ENCODE measurements at regions of chr6 and their contacts with region 1.

Region 1: DNA sequence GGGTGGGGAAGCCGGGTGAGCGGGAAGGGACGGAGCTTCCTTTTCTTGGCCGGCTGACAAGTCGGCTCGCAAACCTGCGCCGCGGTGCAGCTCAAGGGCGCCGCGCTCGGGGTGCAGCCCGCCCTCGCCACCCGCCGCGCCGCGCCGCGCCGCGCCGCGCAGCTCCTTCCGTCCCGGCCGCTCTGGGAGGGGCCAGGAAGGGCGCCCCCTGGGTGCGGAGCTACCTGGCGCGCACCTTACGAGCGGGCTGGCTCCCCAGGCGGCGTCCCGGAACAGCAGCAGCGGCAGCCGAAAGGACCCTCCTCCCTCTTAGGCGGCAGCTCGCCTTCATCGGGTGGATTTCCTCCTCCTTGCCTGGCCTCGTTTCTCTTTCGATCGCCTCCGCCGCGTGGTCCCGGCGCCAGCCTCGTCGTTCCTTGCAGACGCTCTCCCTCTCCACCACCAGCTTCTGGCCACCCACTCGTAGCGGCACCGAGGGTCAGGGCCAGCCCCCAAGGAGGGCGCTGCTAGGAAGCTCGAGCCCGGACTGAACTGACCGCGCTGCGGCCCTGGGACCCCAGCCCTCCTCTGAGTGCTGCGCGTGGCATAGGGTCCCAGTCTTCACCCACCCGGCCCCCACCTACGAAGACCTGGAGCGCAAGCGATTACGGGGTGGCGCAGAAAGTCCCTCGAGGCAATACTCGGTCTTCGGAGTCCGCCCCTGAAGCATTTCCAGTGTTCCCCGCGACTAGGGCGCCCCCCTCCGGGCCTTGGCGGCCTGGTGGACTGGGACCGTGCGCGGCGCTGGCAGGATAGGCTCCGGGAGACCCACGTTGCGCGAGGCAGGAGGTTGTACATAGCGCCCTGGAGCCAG is at the start of gene MAP3K5:
- DNase-seq: peak; percentile 91
- ATAC-seq: peak; percentile 74
- H3K4me3 Mint-ChIP-seq: peak within 1 kb of the TSS; percentile 97
- H3K27ac Mint-ChIP-seq: peak within 1 kb of the TSS; percentile 96
- H3K4me1 Mint-ChIP-seq: peaks cover 42% of the 10 kb centered on the region
- H3K27me3 Mint-ChIP-seq: no peaks in the 10 kb centered on the region
- CTCF ChIP-seq: no peak
- total RNA-seq, gene MAP3K5: 21.6 and 24.4 TPM in 2 replicates

Region 2: DNA sequence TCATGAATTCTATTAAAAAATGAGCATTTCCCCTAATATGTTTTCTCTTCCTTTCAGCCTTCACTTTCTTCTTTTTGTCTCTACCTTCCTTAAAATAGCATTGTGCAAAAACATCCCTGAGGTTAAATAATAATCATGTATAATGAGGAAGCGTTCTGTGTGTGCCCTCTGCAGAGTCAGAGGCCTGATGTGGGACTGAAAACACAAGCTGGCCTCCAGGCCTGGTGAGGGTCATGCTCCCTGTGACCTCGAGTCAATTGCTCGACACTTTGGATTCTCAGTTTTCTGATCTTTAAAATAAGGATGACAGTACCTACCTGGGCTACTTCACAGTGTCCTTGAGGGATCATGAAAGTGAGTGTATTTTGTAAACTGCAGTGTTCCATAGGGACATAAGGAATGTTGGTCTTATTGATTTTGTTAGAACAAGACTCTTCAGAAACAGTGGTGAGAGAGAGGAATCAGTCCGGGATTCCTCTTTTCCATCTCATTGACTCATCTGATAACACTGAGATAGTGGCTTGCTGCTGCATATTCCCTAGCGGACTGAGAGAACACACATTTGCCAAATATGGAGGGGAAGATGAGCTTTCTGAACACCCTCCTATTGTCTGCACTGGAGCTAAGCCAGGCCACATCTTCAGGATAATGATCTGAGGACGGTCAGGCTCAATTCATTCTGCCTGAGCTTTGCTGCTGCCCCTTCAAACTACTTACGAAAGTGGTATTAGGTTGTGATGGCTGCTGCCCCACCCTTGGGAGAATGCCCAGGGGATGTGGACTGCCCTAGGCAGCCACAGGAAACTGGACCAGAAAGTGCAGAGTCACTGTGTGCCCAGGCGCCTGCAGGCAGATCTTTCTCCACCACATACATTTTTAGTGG is 980.8 kb before region 1 on chr6:
- CTCF ChIA-PET with region 1: no interaction called
- POLR2A ChIA-PET with region 1: no interaction called
- intact Hi-C with region 1: no loop called
- DNase-seq: no peak
- ATAC-seq: no peak
- H3K4me3 Mint-ChIP-seq: no peak overlapping the region
- H3K27ac Mint-ChIP-seq: no peak overlapping the region
- H3K4me1 Mint-ChIP-seq: no peaks in the 10 kb centered on the region
- H3K27me3 Mint-ChIP-seq: no peaks in the 10 kb centered on the region
- CTCF ChIP-seq: no peak

Region 3: GRCh38 chr6:136582711-136583471 is 209.7 kb before region 1 on chr6:
- CTCF ChIA-PET with region 1: interaction called, 9 read pairs
- POLR2A ChIA-PET with region 1: no interaction called
- intact Hi-C with region 1: loop called (anchors 1 kb)
- DNase-seq: no peak
- ATAC-seq: peak; percentile 28
- H3K4me3 Mint-ChIP-seq: no peak overlapping the region
- H3K27ac Mint-ChIP-seq: no peak overlapping the region
- H3K4me1 Mint-ChIP-seq: peaks cover 5% of the 10 kb centered on the region
- H3K27me3 Mint-ChIP-seq: no peaks in the 10 kb centered on the region
- CTCF ChIP-seq: no peak

Region 4: DNA sequence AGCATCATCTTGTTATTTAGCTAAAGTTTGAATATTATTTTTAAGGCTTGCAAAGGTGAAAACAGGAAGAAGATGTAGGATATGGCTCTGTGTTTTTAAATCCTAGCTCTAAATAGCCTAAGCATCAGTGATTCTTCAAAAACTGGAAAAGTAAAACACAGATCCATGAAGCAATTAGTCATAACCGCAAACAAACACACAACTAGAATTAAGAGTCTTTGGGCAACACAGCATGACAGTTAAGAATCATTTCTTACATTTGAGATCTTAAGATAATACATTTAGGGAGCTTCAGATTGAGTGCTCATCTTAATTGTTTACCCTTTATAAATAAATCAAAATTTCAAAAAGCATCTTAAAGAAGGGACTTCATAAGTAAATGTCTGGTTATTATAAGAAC is 126.6 kb before region 1 on chr6:
- CTCF ChIA-PET with region 1: interaction called, 12 read pairs
- POLR2A ChIA-PET with region 1: no interaction called
- intact Hi-C with region 1: no loop called
- DNase-seq: no peak
- ATAC-seq: no peak
- H3K4me3 Mint-ChIP-seq: no peak overlapping the region
- H3K27ac Mint-ChIP-seq: no peak overlapping the region
- H3K4me1 Mint-ChIP-seq: no peaks in the 10 kb centered on the region
- H3K27me3 Mint-ChIP-seq: no peaks in the 10 kb centered on the region
- CTCF ChIP-seq: no peak

Region 5: GRCh38 chr6:136723780-136724179 is 68.9 kb before region 1 on chr6:
- CTCF ChIA-PET with region 1: interaction called, 55 read pairs
- POLR2A ChIA-PET with region 1: interaction called, 53 read pairs
- intact Hi-C with region 1: loop called (anchors 1 kb)
- DNase-seq: peak; percentile 25
- ATAC-seq: peak; percentile 89
- H3K4me3 Mint-ChIP-seq: peak overlapping the region; percentile 21
- H3K27ac Mint-ChIP-seq: peak overlapping the region; percentile 59
- H3K4me1 Mint-ChIP-seq: peaks cover 54% of the 10 kb centered on the region
- H3K27me3 Mint-ChIP-seq: no peaks in the 10 kb centered on the region
- CTCF ChIP-seq: no peak

Region 6: DNA sequence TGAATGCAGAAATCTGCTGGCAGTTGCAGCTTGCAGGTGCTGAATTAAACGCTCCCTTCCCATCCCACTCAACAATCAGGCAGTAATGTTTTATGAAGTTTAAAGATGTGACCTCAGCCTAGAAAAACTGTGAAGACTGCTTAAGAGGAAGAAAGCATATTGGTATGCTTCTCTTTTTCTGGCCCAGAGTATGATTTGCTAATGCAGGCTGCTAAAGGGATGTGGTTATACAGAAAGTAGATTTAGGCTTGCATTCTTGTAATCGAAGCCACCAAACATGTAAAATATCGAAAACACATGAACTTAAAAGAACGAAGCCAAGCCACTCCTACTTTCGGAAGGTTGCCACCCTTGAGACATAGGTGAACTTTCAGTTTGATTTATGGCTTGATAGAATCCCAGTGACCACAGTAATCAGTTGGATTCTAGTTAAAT is 41.1 kb before region 1 on chr6:
- CTCF ChIA-PET with region 1: interaction called, 8 read pairs
- POLR2A ChIA-PET with region 1: interaction called, 7 read pairs
- intact Hi-C with region 1: loop called (anchors 1 kb)
- DNase-seq: no peak
- ATAC-seq: peak; percentile 93
- H3K4me3 Mint-ChIP-seq: peak overlapping the region; percentile 60
- H3K27ac Mint-ChIP-seq: peak overlapping the region; percentile 82
- H3K4me1 Mint-ChIP-seq: peaks cover 63% of the 10 kb centered on the region
- H3K27me3 Mint-ChIP-seq: no peaks in the 10 kb centered on the region
- CTCF ChIP-seq: no peak

Region 7: DNA sequence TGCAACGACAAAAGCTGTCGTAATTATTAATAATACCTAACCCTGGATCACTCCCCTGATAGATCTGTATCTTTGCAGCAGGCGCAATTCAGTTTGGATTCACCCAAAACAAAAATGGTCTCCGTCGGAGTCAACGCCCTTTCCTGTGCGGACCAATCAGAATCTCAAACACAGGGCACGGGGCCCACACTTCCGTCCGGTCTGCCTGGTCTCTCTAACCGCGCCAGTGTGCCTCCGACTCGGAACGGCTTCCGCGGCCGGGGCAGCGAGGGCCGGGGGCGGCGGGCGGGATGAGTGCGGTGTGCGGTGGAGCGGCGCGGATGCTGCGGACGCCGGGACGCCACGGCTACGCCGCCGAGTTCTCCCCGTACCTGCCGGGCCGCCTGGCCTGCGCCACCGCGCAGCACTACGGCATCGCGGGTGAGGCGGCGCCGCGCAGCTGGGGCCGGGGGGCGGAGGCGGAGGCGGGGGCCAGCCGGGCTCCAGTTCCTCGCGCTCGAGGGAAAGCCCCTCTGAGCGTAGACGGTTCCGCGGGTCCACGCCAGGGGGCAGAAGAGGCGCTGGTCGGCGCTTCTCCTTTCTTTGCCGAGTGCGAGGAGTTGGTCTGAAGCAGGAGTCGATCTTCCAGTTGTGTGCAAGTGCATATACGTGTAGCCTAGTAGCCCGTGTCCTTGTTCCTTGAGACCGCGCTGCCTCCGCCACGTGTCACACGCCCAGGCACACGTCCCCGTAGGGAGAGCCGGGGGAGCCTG is 29.9 kb after region 1 on chr6 and contains the start of gene PEX7:
- CTCF ChIA-PET with region 1: interaction called, 13 read pairs
- POLR2A ChIA-PET with region 1: interaction called, 23 read pairs
- intact Hi-C with region 1: loop called (anchors 1 kb)
- DNase-seq: peak; percentile 86
- ATAC-seq: peak; percentile 91
- H3K4me3 Mint-ChIP-seq: peak within 1 kb of the TSS; percentile 94
- H3K27ac Mint-ChIP-seq: peak within 1 kb of the TSS; percentile 98
- H3K4me1 Mint-ChIP-seq: peaks cover 16% of the 10 kb centered on the region
- H3K27me3 Mint-ChIP-seq: peaks cover 4% of the 10 kb centered on the region
- CTCF ChIP-seq: no peak
- total RNA-seq, gene PEX7: 5.0 and 6.8 TPM in 2 replicates

Measured in activated B cell treated with CpG ODN at 0.5 μM for 24 hours (primary cell).